Adrenal gland (tissue), 19 donors: ENCODE measurements at regions of chr1 and their contacts with region 1.

Region 1: GRCh38 chr1:158087320-158087927 is 93.3 kb upstream of the CD1D start:
- DNase-seq: peak; percentile 41 to 81 (median 67)
- H3K4me3 ChIP-seq: no peak overlapping the region
- H3K27ac ChIP-seq: no peak overlapping the region
- H3K4me1 ChIP-seq: no peaks in the 10 kb centered on the region
- H3K27me3 ChIP-seq: no peaks in the 10 kb centered on the region
- CTCF ChIP-seq: peak; percentile 67 to 90 (median 84)
- POLR2A ChIP-seq: no peak

Region 2: GRCh38 chr1:157831968-157832626 is 255.3 kb before region 1 on chr1:
- intact Hi-C with region 1: no loop called
- DNase-seq: no peak
- H3K4me3 ChIP-seq: no peak overlapping the region
- H3K27ac ChIP-seq: no peak overlapping the region
- H3K4me1 ChIP-seq: no peaks in the 10 kb centered on the region
- H3K27me3 ChIP-seq: no peaks in the 10 kb centered on the region
- CTCF ChIP-seq: no peak
- POLR2A ChIP-seq: no peak

Region 3: GRCh38 chr1:158035976-158036583 is 51.3 kb before region 1 on chr1:
- intact Hi-C with region 1: loop called (anchors 5 to 10 kb)
- DNase-seq: peak in 6 of 7 donors; percentile 44 to 76 (median 64)
- H3K4me3 ChIP-seq: no peak overlapping the region
- H3K27ac ChIP-seq: peak overlapping the region in 2 of 5 donors; percentile 9 to 38
- H3K4me1 ChIP-seq: peaks cover 5 to 17% of the 10 kb centered on the region in 2 donors
- H3K27me3 ChIP-seq: no peaks in the 10 kb centered on the region
- CTCF ChIP-seq: peak; percentile 75 to 84 (median 81)
- POLR2A ChIP-seq: no peak

Region 4: DNA sequence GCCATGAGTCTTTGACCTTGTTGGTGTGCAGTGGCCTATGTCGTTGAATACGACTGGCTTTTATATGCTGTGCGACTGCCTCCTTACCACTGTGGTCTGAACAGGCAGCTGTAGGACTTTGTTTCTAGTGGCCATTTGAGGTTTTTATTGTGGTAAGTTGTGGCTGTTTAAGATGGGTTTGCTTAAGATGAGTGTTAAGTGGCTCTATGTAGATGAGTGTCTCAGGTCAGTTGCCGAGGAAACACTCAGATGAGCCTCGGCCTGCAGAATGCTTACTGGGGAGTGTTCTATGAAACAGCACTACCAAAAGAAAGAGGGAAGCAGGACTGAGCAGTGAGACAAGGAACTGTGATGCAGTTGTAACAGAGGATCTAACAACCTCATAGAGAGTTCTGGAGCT is 187.4 kb after region 1 on chr1:
- intact Hi-C with region 1: no loop called
- DNase-seq: no peak
- H3K4me3 ChIP-seq: no peak overlapping the region
- H3K27ac ChIP-seq: no peak overlapping the region
- H3K4me1 ChIP-seq: no peaks in the 10 kb centered on the region
- H3K27me3 ChIP-seq: no peaks in the 10 kb centered on the region
- CTCF ChIP-seq: no peak
- POLR2A ChIP-seq: no peak

Region 5: DNA sequence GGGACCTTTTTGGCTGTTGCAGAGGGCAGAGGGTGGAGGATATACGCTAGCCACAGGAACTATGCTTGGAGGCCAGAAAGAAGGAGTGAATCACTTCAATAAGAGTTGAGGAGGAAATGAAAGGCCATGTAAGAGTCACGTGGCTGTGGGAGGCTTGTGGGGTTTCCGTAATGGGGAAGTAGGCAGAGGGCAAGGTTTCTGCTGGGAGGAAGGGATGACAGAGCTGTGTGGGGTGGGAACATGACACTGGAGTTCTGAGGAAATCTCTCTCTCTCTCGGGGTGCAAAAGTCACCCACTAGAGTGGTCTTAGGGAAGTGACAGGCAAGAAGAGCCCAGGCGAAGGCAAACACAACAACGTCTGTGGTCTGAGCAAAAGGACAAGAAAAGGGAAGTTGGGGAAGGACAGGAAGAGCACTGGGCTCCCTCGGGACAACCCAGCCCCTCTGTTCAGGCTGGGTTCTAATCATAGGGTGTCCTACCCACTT is 198.4 kb after region 1 on chr1:
- intact Hi-C with region 1: no loop called
- DNase-seq: peak; percentile 24 to 72 (median 53)
- H3K4me3 ChIP-seq: no peak overlapping the region
- H3K27ac ChIP-seq: peak overlapping the region in 1 of 5 donors; percentile 64
- H3K4me1 ChIP-seq: no peaks in the 10 kb centered on the region
- H3K27me3 ChIP-seq: no peaks in the 10 kb centered on the region
- CTCF ChIP-seq: no peak
- POLR2A ChIP-seq: no peak